Right ventricle myocardium inferior (tissue), 1 donor: ENCODE measurements at regions of chr6 and their contacts with region 1.

Region 1: GRCh38 chr6:18503593-18504231 is 116.6 kb downstream of the RNF144B start:
- DNase-seq: no peak
- ATAC-seq: peak; percentile 71

Region 2: DNA sequence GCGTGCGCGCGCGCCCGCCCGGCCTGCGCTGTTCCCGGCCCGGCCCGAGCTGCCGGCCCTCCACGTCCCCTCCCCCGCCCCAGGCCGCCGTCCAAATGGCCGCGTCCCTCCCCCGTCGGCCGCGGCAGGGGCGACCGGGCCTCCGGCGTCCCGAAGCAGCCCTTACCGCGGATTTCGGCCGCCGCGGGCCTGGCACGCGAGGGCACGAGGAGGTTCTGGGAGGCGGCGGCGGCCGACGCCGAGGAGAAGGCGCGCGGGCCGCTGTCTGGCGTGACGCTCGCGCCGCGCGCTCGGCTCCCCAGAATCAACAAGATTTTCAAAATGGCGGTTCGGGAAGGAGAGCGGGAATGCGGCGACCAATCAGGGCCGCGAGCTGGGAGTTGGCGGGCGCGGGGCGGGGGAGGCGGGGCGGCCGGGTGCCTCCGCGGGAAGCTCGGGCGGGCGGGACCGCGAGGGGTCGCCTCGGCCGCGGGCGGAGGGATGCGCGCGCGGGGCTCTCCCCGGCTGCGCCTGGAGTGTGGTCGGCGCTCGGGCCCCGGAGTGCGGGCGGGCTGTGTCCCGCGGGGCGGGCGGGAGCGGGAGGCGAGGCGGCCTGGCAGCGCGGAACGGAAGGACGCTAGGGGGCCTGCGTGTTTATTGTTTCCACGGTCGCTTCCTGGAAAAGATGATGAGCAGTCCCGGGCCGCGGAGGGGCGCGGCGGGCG is 239.3 kb before region 1 on chr6 and contains the start of gene DEK:
- intact Hi-C with region 1: loop called (anchors 2 kb)
- DNase-seq: peak; percentile 93
- ATAC-seq: peak; percentile 88
- total RNA-seq, gene DEK: 68.6 TPM

Region 3: GRCh38 chr6:18323935-18324705 is 179.6 kb before region 1 on chr6:
- intact Hi-C with region 1: loop called (anchors 1 kb)
- DNase-seq: no peak
- ATAC-seq: peak; percentile 74

Region 4: DNA sequence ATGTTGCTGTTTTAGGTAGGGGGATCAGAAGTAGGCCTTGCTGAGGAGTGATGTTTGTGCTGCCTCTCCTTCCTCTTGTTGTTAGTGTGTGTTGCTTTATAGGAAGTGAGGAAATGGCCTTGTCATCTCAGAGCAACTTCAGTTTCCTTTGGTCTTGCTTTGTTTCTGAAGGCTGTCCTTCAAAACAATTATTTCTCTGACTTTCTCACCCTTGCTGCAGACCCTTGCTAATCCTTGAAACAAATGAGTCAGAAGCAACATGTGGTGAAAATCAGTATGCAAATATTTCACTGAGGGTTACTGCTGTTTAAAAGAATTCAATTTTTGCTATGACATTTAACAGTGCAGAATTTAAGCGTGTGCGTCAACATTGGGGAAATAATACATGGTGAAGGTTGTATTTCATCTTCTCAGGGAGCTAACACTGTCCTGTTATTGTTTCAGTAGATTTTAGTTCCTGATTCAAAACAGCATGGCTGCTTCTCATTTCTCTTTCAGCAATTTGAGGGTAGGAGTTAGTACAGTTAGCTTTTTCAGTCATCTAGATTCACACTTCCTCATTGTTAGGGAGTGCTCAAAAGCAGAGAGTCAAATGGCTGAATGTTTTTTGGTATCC is 102.8 kb before region 1 on chr6:
- intact Hi-C with region 1: loop called (anchors 10 kb)
- DNase-seq: no peak
- ATAC-seq: peak; percentile 46